Caco-2 (cell line): ENCODE measurements at regions of chr16 and their contacts with region 1.

Region 1: GRCh38 chr16:2911580-2912329 is at the start of gene FLYWCH1:
- DNase-seq: peak; percentile 97 to 98
- H3K4me3 ChIP-seq: peak within 1 kb of the TSS; percentile 67
- H3K4me3 Mint-ChIP-seq: peak within 1 kb of the TSS; percentile 90
- H3K27ac Mint-ChIP-seq: peak within 1 kb of the TSS; percentile 63
- H3K4me1 ChIP-seq: peaks cover 6% of the 10 kb centered on the region; the same call in 1 of the 2 replicates
- H3K4me1 Mint-ChIP-seq: peaks cover 7% of the 10 kb centered on the region
- H3K27me3 ChIP-seq: no peaks in the 10 kb centered on the region
- H3K27me3 Mint-ChIP-seq: no peaks in the 10 kb centered on the region
- CTCF ChIP-seq: no peak
- total RNA-seq, gene FLYWCH1: 23.3 and 27.9 TPM in 2 replicates

Region 2: DNA sequence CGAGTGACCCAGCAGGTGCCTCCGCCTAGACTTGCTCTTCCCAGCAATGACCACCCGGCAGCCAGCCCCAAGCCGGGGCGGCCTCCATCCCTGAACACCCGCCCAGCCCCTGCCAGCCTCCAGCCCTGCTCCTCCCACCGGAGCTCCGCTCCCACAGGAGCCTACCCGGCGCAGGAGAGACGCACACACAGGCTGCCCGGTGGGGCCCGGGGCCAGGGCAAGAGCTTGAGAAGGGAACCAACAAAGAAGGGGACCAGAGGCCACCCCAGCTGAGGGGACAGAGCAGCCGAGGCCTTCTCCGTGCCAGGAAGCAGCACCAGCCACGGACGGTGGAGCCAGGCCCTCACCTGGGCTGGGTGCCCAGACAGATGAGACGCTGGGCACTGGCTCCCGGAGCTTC is 789.9 kb before region 1 on chr16:
- CTCF ChIA-PET with region 1: no interaction called
- POLR2A ChIA-PET with region 1: no interaction called
- intact Hi-C with region 1: no loop called
- DNase-seq: no peak
- H3K4me3 ChIP-seq: no peak overlapping the region
- H3K4me3 Mint-ChIP-seq: no peak overlapping the region
- H3K27ac Mint-ChIP-seq: no peak overlapping the region
- H3K4me1 ChIP-seq: no peaks in the 10 kb centered on the region
- H3K4me1 Mint-ChIP-seq: no peaks in the 10 kb centered on the region
- H3K27me3 ChIP-seq: no peaks in the 10 kb centered on the region
- H3K27me3 Mint-ChIP-seq: no peaks in the 10 kb centered on the region
- CTCF ChIP-seq: no peak

Region 3: GRCh38 chr16:2858265-2859025 is 53.3 kb before region 1 on chr16:
- CTCF ChIA-PET with region 1: no interaction called
- POLR2A ChIA-PET with region 1: no interaction called
- intact Hi-C with region 1: no loop called
- DNase-seq: peak; percentile 96
- H3K4me3 ChIP-seq: peak overlapping the region; percentile 66
- H3K4me3 Mint-ChIP-seq: peak overlapping the region; percentile 84
- H3K27ac Mint-ChIP-seq: peak overlapping the region; percentile 79
- H3K4me1 ChIP-seq: peaks cover 10% of the 10 kb centered on the region; the same call in 1 of the 2 replicates
- H3K4me1 Mint-ChIP-seq: peaks cover 7% of the 10 kb centered on the region
- H3K27me3 ChIP-seq: no peaks in the 10 kb centered on the region
- H3K27me3 Mint-ChIP-seq: no peaks in the 10 kb centered on the region
- CTCF ChIP-seq: peak; percentile 34 to 42

Region 4: GRCh38 chr16:2883027-2883851 is 28.5 kb before region 1 on chr16 and contains the start of gene FLYWCH2:
- CTCF ChIA-PET with region 1: interaction called, 16 read pairs
- POLR2A ChIA-PET with region 1: interaction called, 10 read pairs
- intact Hi-C with region 1: no loop called
- DNase-seq: peak; percentile 98 to 100
- H3K4me3 ChIP-seq: peak within 1 kb of the TSS; percentile 73
- H3K4me3 Mint-ChIP-seq: peak within 1 kb of the TSS; percentile 80
- H3K27ac Mint-ChIP-seq: peak within 1 kb of the TSS; percentile 65
- H3K4me1 ChIP-seq: no peaks in the 10 kb centered on the region
- H3K4me1 Mint-ChIP-seq: no peaks in the 10 kb centered on the region
- H3K27me3 ChIP-seq: no peaks in the 10 kb centered on the region
- H3K27me3 Mint-ChIP-seq: no peaks in the 10 kb centered on the region
- CTCF ChIP-seq: peak in 1 of 2 experiments; percentile 5
- total RNA-seq, gene FLYWCH2: 26.0 and 28.7 TPM in 2 replicates

Region 5: GRCh38 chr16:2926650-2927646 is 15.2 kb after region 1 on chr16:
- CTCF ChIA-PET with region 1: interaction called, 15 read pairs
- POLR2A ChIA-PET with region 1: no interaction called
- intact Hi-C with region 1: no loop called
- DNase-seq: peak; percentile 77 to 83
- H3K4me3 ChIP-seq: no peak overlapping the region
- H3K4me3 Mint-ChIP-seq: peak overlapping the region; percentile 44
- H3K27ac Mint-ChIP-seq: peak overlapping the region; percentile 23
- H3K4me1 ChIP-seq: peaks cover 13% of the 10 kb centered on the region
- H3K4me1 Mint-ChIP-seq: no peaks in the 10 kb centered on the region
- H3K27me3 ChIP-seq: no peaks in the 10 kb centered on the region
- H3K27me3 Mint-ChIP-seq: no peaks in the 10 kb centered on the region
- CTCF ChIP-seq: peak; percentile 85 to 90